H1 (cell line): ENCODE measurements at regions of chr16 and their contacts with region 1.

Region 1: DNA sequence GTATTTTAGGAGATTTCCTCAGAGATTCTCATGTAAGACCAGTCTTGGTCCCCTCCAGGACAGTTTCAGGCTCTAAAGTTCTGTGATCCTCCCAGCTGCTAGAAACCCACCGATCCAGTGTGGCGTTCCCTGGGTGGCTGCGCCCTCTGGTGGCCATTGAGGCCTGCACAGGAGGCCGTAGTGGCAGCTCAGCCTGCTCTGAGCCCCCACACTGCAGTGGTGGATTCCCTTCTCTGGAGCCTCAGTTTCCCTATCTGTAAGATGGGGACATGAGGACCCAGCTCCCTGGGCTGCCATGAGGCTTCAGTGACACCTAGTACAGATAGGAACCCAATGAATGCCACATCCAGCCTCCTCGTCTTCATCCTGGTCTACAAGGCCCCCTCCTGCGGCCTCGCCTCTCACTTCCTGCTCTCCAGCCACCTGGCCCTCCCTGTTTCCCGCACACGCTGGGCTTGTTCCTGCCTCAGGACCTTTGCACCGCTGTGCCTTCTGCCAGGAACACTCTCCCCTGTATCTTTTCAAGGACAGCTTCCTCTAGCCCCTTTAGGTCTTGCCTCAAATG is 16.5 kb downstream of the CCDC102A start:
- DNase-seq: peak in 1 of 2 experiments; percentile 93
- H3K4me3 ChIP-seq: no peak overlapping the region
- H3K27ac ChIP-seq: no peak overlapping the region
- H3K4me1 ChIP-seq: peaks cover 0 to 2% (median 0%) of the 10 kb centered on the region in 4 experiments; a peak in 1 of 7 replicates
- H3K27me3 ChIP-seq: peaks cover 0 to 2% (median 0%) of the 10 kb centered on the region in 4 experiments; a peak in 2 of 7 replicates
- CTCF ChIP-seq: peak; percentile 96 to 99 (median 97)
- EP300 ChIP-seq: no peak
- POLR2A ChIP-seq: no peak
- RAD21 ChIP-seq: peak; percentile 94 to 97

Region 2: GRCh38 chr16:57447186-57447962 is 72.5 kb before region 1 on chr16 and contains the starts of genes CIAPIN1 and COQ9:
- CTCF ChIA-PET with region 1: interaction called, 10 read pairs
- POLR2A ChIA-PET with region 1: interaction called, 5 read pairs
- DNase-seq: peak; percentile 73 to 90
- H3K4me3 ChIP-seq: peak within 1 kb of the TSS; percentile 80 to 97 (median 96)
- H3K27ac ChIP-seq: peak within 1 kb of the TSS; percentile 73
- H3K4me1 ChIP-seq: peaks cover 0 to 3% (median 3%) of the 10 kb centered on the region in 4 experiments; a peak in 5 of 7 replicates
- H3K27me3 ChIP-seq: no peaks in the 10 kb centered on the region
- CTCF ChIP-seq: no peak
- EP300 ChIP-seq: no peak
- POLR2A ChIP-seq: peak; percentile 76 to 95
- RAD21 ChIP-seq: no peak
- total RNA-seq, gene CIAPIN1: 83.6 and 90.7 TPM in 2 replicates
- total RNA-seq, gene COQ9: 31.7 and 33.3 TPM in 2 replicates

Region 3: DNA sequence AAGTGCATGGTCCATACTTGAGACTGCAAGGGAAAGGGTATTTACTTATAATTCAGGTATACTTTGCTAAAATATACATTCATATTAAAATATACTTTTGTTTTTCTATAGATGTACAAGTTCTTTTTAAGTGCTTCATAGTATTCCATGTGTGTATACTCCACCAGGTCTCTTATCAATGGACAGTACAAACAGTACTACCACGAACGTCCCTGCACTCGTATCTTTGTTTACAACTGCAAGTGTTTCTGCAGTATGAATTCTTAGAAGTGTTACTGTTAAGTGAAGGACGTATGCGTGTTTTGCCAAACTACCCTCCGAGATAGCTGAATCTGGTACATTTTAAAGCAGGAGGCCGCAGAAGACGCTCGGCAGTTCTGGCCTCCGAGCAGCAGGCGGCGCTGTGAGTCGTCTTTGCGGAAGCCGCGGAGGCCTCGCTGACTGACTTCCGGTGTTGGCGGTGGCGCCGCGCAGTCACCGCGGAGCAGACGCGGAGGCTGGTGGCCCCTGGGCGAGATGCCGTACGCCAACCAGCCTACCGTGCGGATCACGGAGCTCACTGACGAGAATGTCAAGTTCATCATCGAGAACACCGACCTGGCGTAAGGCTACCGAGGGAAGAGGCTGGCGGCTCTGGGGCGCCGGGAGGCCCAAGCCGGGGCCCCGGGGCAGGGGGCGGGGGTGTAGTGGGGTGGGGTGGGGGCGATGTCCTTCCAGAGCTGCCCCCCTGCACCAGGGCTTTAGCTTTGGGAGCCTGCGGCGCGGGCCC is 57.5 kb before region 1 on chr16 and contains the start of gene POLR2C:
- CTCF ChIA-PET with region 1: interaction called, 41 read pairs
- POLR2A ChIA-PET with region 1: interaction called, 4 read pairs
- DNase-seq: peak; percentile 60 to 95
- H3K4me3 ChIP-seq: peak within 1 kb of the TSS; percentile 93 to 97 (median 96)
- H3K27ac ChIP-seq: no peak within 1 kb of the TSS
- H3K4me1 ChIP-seq: no peaks in the 10 kb centered on the region; a peak in 2 of 7 replicates
- H3K27me3 ChIP-seq: no peaks in the 10 kb centered on the region
- CTCF ChIP-seq: peak; percentile 86 to 97 (median 94)
- EP300 ChIP-seq: peak in 1 of 2 experiments; percentile 51; a peak in 1 of 3 replicates
- POLR2A ChIP-seq: peak; percentile 96 to 97
- RAD21 ChIP-seq: peak; percentile 27 to 55; a peak in 3 of 4 replicates
- total RNA-seq, gene POLR2C: 71.2 and 72.5 TPM in 2 replicates

Region 4: GRCh38 chr16:57475711-57476339 is 44.1 kb before region 1 on chr16:
- CTCF ChIA-PET with region 1: interaction called, 210 read pairs
- POLR2A ChIA-PET with region 1: interaction called, 67 read pairs
- DNase-seq: peak; percentile 77 to 91
- H3K4me3 ChIP-seq: peak overlapping the region in 1 of 4 experiments; percentile 42; a peak in 2 of 8 replicates
- H3K27ac ChIP-seq: no peak overlapping the region
- H3K4me1 ChIP-seq: peaks cover 10 to 66% (median 51%) of the 10 kb centered on the region in 4 experiments
- H3K27me3 ChIP-seq: no peaks in the 10 kb centered on the region; a peak in 1 of 7 replicates
- CTCF ChIP-seq: peak; percentile 69 to 97 (median 89)
- EP300 ChIP-seq: peak in 1 of 2 experiments; percentile 25; a peak in 1 of 3 replicates
- POLR2A ChIP-seq: no peak
- RAD21 ChIP-seq: peak; percentile 65 to 68

Region 5: GRCh38 chr16:57485916-57486857 is 33.7 kb before region 1 on chr16 and contains the start of gene DOK4:
- CTCF ChIA-PET with region 1: interaction called, 210 read pairs
- POLR2A ChIA-PET with region 1: interaction called, 67 read pairs
- DNase-seq: peak in 1 of 2 experiments; percentile 91
- H3K4me3 ChIP-seq: peak within 1 kb of the TSS; percentile 53 to 79 (median 72)
- H3K27ac ChIP-seq: no peak within 1 kb of the TSS
- H3K4me1 ChIP-seq: peaks cover 0 to 14% (median 10%) of the 10 kb centered on the region in 4 experiments; a peak in 6 of 7 replicates
- H3K27me3 ChIP-seq: peaks cover 0 to 12% (median 4%) of the 10 kb centered on the region in 4 experiments; a peak in 4 of 7 replicates
- CTCF ChIP-seq: no peak
- EP300 ChIP-seq: no peak
- POLR2A ChIP-seq: no peak
- RAD21 ChIP-seq: no peak
- total RNA-seq, gene DOK4: 28.9 and 29.9 TPM in 2 replicates

Region 6: GRCh38 chr16:57500578-57501111 is 19.2 kb before region 1 on chr16:
- CTCF ChIA-PET with region 1: interaction called, 89 read pairs
- POLR2A ChIA-PET with region 1: interaction called, 3 read pairs
- DNase-seq: no peak
- H3K4me3 ChIP-seq: no peak overlapping the region
- H3K27ac ChIP-seq: no peak overlapping the region
- H3K4me1 ChIP-seq: peaks cover 0 to 5% (median 0%) of the 10 kb centered on the region in 4 experiments; a peak in 3 of 7 replicates
- H3K27me3 ChIP-seq: no peaks in the 10 kb centered on the region
- CTCF ChIP-seq: no peak
- EP300 ChIP-seq: no peak
- POLR2A ChIP-seq: no peak
- RAD21 ChIP-seq: no peak

Region 7: DNA sequence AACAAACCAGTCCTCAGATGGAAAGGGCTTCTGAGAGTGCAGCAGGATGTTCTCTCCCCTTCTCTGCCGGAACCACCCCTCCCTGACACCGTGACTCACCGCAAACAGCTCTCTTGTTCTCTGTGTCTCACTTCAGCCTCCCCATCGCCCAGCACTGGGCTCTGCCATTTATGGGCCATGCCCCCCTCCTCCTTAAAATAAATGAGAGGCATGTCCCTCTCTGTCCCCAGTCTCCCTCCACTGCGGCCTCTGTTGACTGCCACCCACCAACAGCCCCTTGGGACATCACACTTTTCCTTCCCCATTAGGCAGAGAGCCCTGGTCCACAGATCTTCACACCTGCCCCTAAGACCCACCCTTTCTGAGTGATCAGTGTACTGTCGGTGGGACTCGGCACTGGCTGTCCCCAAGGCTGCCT is 10.2 kb after region 1 on chr16:
- CTCF ChIA-PET with region 1: interaction called, 14 read pairs
- POLR2A ChIA-PET with region 1: interaction called, 28 read pairs
- DNase-seq: no peak
- H3K4me3 ChIP-seq: peak overlapping the region in 2 of 4 experiments; percentile 1 to 73; a peak in 4 of 8 replicates
- H3K27ac ChIP-seq: no peak overlapping the region
- H3K4me1 ChIP-seq: peaks cover 4 to 40% (median 26%) of the 10 kb centered on the region in 4 experiments
- H3K27me3 ChIP-seq: peaks cover 0 to 13% (median 4%) of the 10 kb centered on the region in 4 experiments; a peak in 4 of 7 replicates
- CTCF ChIP-seq: no peak
- EP300 ChIP-seq: no peak
- POLR2A ChIP-seq: no peak
- RAD21 ChIP-seq: no peak